ENCODE measurements at regions of chr12 and their contacts with region 1.

Region 1: DNA sequence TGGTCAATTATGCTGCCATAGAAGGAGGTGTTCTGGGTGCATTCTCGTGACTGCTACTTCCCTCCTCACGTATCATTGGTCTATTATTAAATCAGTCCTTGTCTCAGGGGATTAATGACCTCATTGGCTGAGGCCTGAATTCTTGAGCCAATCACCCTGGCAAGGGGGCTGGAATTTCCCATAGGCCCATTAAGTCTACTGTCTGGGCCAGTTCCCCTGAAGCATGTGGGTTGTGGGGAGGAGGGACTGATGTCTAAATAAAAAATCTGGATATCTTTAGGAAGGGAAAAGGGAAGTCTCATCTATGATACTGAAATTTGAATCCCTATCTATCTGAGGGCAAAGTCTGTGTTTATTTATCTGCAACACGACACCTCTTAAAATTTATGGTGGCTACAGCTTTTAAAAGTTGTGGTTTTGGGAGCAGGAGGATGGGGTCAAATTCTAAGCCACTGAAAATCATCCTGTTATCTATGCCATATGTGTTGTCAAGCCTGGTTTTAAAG is 71.9 kb downstream of the DYRK2 start:
- DNase-seq: peak; percentile 61 to 80
- H3K4me3 ChIP-seq: no peak overlapping the region
- H3K4me3 Mint-ChIP-seq: peak overlapping the region; percentile 71
- H3K27ac Mint-ChIP-seq: peak overlapping the region; percentile 75
- H3K4me1 ChIP-seq: peaks cover 55% of the 10 kb centered on the region
- H3K4me1 Mint-ChIP-seq: peaks cover 27% of the 10 kb centered on the region
- H3K27me3 ChIP-seq: no peaks in the 10 kb centered on the region
- H3K27me3 Mint-ChIP-seq: no peaks in the 10 kb centered on the region
- CTCF ChIP-seq: no peak

Region 2: DNA sequence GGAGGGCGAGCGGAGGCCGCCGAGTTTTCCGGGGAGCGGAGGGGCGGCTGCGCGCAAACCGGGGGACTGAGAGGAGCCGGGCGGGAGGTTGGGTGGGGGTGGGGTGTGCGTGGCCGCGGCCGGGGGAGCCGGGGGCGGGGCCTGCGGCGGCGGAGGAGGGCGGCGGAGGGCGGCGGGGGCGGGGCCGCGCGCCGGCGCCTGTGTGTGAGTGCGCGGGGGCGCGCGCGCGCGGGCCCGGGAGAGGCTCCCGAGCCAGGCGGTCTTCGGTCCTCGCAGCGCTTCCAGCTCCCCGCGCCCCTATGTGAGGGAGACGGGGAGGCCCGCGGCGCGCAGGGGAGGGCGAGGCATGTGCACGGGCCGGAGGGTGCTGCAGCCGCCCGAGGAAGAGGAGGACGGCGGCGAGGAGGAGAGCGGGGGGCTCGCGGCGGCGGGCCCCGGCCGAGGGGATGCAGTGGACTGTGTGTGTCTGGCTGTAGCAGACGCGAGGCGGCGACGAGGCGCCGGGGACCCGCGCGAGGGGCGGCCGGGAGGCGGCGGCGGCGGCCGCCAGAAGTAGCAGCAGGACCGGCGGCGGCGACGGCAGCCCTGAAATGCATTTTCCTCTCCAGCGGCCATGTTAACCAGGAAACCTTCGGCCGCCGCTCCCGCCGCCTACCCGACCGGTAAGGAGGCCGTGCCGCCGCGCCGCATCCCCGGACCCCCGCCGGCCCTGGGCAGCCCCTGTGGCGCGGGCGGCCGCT is 71.7 kb before region 1 on chr12 and contains the start of gene DYRK2:
- CTCF ChIA-PET with region 1: no interaction called
- POLR2A ChIA-PET with region 1: no interaction called
- intact Hi-C with region 1: loop called (anchors 2 kb)
- DNase-seq: peak; percentile 74 to 82
- H3K4me3 ChIP-seq: peak within 1 kb of the TSS; percentile 75
- H3K4me3 Mint-ChIP-seq: peak within 1 kb of the TSS; percentile 79
- H3K27ac Mint-ChIP-seq: peak within 1 kb of the TSS; percentile 93
- H3K4me1 ChIP-seq: peaks cover 24% of the 10 kb centered on the region; the same call in 1 of the 2 replicates
- H3K4me1 Mint-ChIP-seq: peaks cover 14% of the 10 kb centered on the region
- H3K27me3 ChIP-seq: no peaks in the 10 kb centered on the region
- H3K27me3 Mint-ChIP-seq: no peaks in the 10 kb centered on the region
- CTCF ChIP-seq: peak in 1 of 2 experiments; percentile 8
- total RNA-seq, gene DYRK2: 24.4 and 24.6 TPM in 2 replicates

Region 3: GRCh38 chr12:67661311-67662021 is 58.9 kb before region 1 on chr12:
- CTCF ChIA-PET with region 1: no interaction called
- POLR2A ChIA-PET with region 1: no interaction called
- intact Hi-C with region 1: no loop called
- DNase-seq: no peak
- H3K4me3 ChIP-seq: no peak overlapping the region
- H3K4me3 Mint-ChIP-seq: no peak overlapping the region
- H3K27ac Mint-ChIP-seq: no peak overlapping the region
- H3K4me1 ChIP-seq: no peaks in the 10 kb centered on the region
- H3K4me1 Mint-ChIP-seq: no peaks in the 10 kb centered on the region
- H3K27me3 ChIP-seq: no peaks in the 10 kb centered on the region
- H3K27me3 Mint-ChIP-seq: no peaks in the 10 kb centered on the region
- CTCF ChIP-seq: no peak

Region 4: DNA sequence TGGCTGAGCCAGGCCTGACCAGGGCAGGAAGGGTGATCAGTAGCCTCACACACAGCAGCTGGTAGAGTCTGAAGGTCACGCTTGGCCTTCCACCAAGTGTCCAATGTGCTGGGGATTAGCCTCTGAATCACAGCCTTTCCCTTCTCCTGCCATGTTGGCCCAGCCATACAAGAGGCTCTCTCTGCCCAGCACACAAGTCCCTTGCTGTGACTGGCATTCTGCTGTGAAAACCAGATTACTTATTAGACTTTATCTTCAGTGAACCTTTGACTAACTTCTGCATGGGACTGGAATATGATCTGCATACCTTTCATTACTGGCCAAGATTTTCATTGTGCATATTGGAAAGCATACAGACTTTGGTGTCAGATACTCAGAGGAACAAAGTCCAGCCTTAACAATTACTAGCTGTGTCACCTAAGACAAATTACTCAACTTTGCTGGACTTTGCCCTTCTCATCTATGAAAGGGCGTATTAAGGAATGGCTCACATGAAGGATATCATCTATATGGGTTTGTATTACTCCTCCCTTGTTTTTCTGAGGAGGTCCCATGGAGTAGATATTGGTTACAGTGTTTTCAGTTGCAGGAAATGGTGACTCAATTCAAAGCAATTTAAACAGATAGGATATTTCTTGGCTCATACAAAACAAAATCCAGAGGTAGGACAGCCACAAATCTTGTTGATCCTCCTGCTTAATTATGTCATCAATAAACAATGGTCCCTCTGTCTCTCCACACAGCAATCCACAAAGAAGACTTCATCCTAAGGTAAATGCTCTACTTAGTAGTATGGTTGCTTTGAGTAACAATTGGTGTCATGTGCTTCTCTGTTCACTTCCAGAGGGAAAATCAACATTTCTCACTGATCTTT is 27.7 kb after region 1 on chr12:
- CTCF ChIA-PET with region 1: no interaction called
- POLR2A ChIA-PET with region 1: no interaction called
- intact Hi-C with region 1: loop called (anchors 1 kb)
- DNase-seq: peak; percentile 54 to 78
- H3K4me3 ChIP-seq: no peak overlapping the region
- H3K4me3 Mint-ChIP-seq: peak overlapping the region; percentile 59
- H3K27ac Mint-ChIP-seq: peak overlapping the region; percentile 94
- H3K4me1 ChIP-seq: peaks cover 39% of the 10 kb centered on the region
- H3K4me1 Mint-ChIP-seq: peaks cover 30% of the 10 kb centered on the region
- H3K27me3 ChIP-seq: no peaks in the 10 kb centered on the region
- H3K27me3 Mint-ChIP-seq: no peaks in the 10 kb centered on the region
- CTCF ChIP-seq: peak in 1 of 2 experiments; percentile 16